ENCODE measurements at regions of chr18 and their contacts with region 1.

Region 1: GRCh38 chr18:23032030-23032582 is 99.0 kb downstream of the RBBP8 start:
- DNase-seq: no peak
- ATAC-seq: no peak
- H3K4me3 ChIP-seq: no peak overlapping the region
- H3K4me3 Mint-ChIP-seq: no peak overlapping the region
- H3K27ac ChIP-seq: no peak overlapping the region
- H3K27ac Mint-ChIP-seq: no peak overlapping the region
- H3K4me1 ChIP-seq: no peaks in the 10 kb centered on the region
- H3K4me1 Mint-ChIP-seq: no peaks in the 10 kb centered on the region
- H3K27me3 ChIP-seq: no peaks in the 10 kb centered on the region
- H3K27me3 Mint-ChIP-seq: no peaks in the 10 kb centered on the region
- CTCF ChIP-seq: no peak

Region 2: GRCh38 chr18:23071285-23071684 is 39.2 kb after region 1 on chr18:
- CTCF ChIA-PET with region 1: no interaction called
- POLR2A ChIA-PET with region 1: no interaction called
- intact Hi-C with region 1: loop called (anchors 5 kb)
- DNase-seq: peak; percentile 63 to 95 (median 86)
- ATAC-seq: peak; percentile 92
- H3K4me3 ChIP-seq: peak overlapping the region in 1 of 2 experiments; percentile 8
- H3K4me3 Mint-ChIP-seq: peak overlapping the region; percentile 71
- H3K27ac ChIP-seq: peak overlapping the region in 1 of 2 experiments; percentile 37
- H3K27ac Mint-ChIP-seq: peak overlapping the region; percentile 85
- H3K4me1 ChIP-seq: peaks cover 52% of the 10 kb centered on the region
- H3K4me1 Mint-ChIP-seq: peaks cover 66% of the 10 kb centered on the region
- H3K27me3 ChIP-seq: no peaks in the 10 kb centered on the region
- H3K27me3 Mint-ChIP-seq: no peaks in the 10 kb centered on the region
- CTCF ChIP-seq: no peak

Region 3: DNA sequence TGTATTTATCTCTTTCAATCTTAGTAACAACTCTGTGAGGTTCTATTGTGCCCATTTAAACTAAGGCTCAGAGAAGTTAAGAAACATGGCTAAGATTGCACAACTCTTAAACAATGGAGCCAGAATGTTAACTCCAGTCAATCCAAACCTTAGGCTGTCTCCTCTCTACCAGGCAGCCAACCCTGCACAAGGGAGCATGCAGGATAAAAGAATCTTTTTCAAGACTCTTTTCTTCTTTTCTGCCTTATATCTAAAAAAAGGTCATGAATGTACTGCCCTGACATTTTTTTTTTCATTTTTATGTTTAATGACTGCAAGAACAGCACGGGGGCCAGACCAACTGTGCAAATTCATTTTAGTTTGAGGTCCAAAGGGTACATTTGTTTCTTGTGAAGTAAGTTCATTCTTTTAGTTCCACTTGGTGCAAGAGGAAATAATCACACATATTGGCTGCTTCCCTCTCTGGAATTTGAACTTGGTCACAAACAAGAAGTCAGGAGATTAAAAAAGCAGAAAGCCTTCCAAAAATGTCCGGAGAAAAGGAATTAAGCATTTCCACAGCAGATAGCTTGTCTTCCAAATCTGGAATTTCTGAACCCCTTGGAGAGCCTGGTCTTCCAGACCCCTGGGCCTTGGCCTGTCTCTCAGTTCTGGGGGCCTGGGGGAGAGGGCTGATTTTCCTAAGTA is 325.0 kb after region 1 on chr18:
- CTCF ChIA-PET with region 1: interaction called, 20 read pairs
- POLR2A ChIA-PET with region 1: no interaction called
- intact Hi-C with region 1: loop called in 1 of 2 experiments (anchors 1 kb)
- DNase-seq: no peak
- ATAC-seq: no peak
- H3K4me3 ChIP-seq: no peak overlapping the region
- H3K4me3 Mint-ChIP-seq: no peak overlapping the region
- H3K27ac ChIP-seq: no peak overlapping the region
- H3K27ac Mint-ChIP-seq: no peak overlapping the region
- H3K4me1 ChIP-seq: peaks cover 5% of the 10 kb centered on the region
- H3K4me1 Mint-ChIP-seq: peaks cover 17% of the 10 kb centered on the region
- H3K27me3 ChIP-seq: no peaks in the 10 kb centered on the region
- H3K27me3 Mint-ChIP-seq: no peaks in the 10 kb centered on the region
- CTCF ChIP-seq: no peak

Region 4: DNA sequence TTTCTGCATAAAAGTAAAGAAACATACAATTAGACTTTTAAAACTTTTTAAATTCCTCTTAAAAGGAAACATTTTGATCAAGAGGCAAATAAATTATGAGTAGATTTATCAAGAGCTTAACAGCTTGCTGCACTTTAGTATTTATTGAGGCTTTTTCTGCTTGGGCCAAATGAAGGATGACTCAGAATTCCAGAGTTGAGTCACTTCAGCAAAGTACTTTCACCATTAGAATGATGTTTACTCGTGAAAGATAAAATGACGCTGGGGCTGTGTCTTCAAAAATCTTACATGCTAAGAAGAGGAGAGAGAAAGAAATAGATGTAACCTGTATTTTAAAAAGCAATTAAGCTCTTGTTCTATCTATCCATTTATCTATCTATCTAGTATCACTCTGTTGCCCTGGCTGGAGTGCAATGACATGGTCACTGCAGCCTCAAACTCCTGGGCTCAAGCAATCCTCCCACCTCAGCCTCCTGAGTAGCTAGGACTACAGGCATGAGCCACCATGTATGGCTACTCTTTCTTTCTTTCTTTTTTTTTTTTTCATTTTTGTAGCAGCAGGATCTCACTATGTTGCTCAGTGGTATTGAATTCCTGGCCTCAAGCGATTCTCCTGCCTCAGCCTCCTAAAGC is 345.7 kb after region 1 on chr18:
- CTCF ChIA-PET with region 1: interaction called, 11 read pairs
- POLR2A ChIA-PET with region 1: no interaction called
- intact Hi-C with region 1: no loop called
- DNase-seq: no peak
- ATAC-seq: no peak
- H3K4me3 ChIP-seq: no peak overlapping the region
- H3K4me3 Mint-ChIP-seq: no peak overlapping the region
- H3K27ac ChIP-seq: no peak overlapping the region
- H3K27ac Mint-ChIP-seq: no peak overlapping the region
- H3K4me1 ChIP-seq: no peaks in the 10 kb centered on the region
- H3K4me1 Mint-ChIP-seq: no peaks in the 10 kb centered on the region
- H3K27me3 ChIP-seq: no peaks in the 10 kb centered on the region
- H3K27me3 Mint-ChIP-seq: no peaks in the 10 kb centered on the region
- CTCF ChIP-seq: no peak

Region 5: GRCh38 chr18:23406271-23406787 is 374.2 kb after region 1 on chr18:
- CTCF ChIA-PET with region 1: interaction called, 35 read pairs
- POLR2A ChIA-PET with region 1: no interaction called
- intact Hi-C with region 1: loop called (anchors 1 kb)
- DNase-seq: no peak
- ATAC-seq: no peak
- H3K4me3 ChIP-seq: no peak overlapping the region
- H3K4me3 Mint-ChIP-seq: no peak overlapping the region
- H3K27ac ChIP-seq: no peak overlapping the region
- H3K27ac Mint-ChIP-seq: no peak overlapping the region
- H3K4me1 ChIP-seq: no peaks in the 10 kb centered on the region
- H3K4me1 Mint-ChIP-seq: no peaks in the 10 kb centered on the region
- H3K27me3 ChIP-seq: no peaks in the 10 kb centered on the region
- H3K27me3 Mint-ChIP-seq: no peaks in the 10 kb centered on the region
- CTCF ChIP-seq: no peak

Region 6: DNA sequence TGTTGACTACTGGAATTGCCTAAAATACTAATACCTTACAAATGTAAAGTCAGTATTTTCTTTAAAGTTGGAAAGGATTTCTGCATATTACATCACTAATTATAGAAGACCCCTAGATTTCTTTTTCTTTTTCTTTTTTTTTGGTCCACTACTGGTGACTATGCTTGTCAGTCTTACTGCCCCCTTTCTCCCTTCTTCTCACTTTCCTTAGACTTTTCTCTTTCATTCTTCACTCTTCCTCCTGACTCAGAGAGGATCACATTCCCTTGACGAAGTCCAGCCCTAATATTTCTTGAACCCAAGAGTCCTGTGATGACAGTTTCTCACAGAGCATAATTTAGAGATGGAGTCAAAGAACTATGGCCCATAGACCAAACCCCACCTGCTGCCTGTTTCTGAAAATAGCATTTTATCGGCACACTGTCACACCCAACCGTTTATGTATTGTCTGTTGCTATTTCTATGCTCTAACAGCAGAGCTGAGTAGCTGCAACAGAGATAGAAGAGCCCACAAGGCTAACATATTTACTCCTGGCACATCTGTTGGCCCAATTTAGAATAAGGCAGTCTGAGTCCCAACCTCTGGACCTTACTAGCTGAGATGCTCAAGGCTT is 380.4 kb after region 1 on chr18:
- CTCF ChIA-PET with region 1: interaction called, 35 read pairs
- POLR2A ChIA-PET with region 1: no interaction called
- intact Hi-C with region 1: loop called (anchors 1 kb)
- DNase-seq: no peak
- ATAC-seq: no peak
- H3K4me3 ChIP-seq: no peak overlapping the region
- H3K4me3 Mint-ChIP-seq: no peak overlapping the region
- H3K27ac ChIP-seq: no peak overlapping the region
- H3K27ac Mint-ChIP-seq: no peak overlapping the region
- H3K4me1 ChIP-seq: no peaks in the 10 kb centered on the region
- H3K4me1 Mint-ChIP-seq: no peaks in the 10 kb centered on the region
- H3K27me3 ChIP-seq: no peaks in the 10 kb centered on the region
- H3K27me3 Mint-ChIP-seq: no peaks in the 10 kb centered on the region
- CTCF ChIP-seq: no peak